ENCODE measurements at regions of chr1 and their contacts with region 1.

Region 1: GRCh38 chr1:156146020-156146768 is 7.2 kb upstream of the SEMA4A start:
- DNase-seq: peak; percentile 97
- ATAC-seq: peak; percentile 81
- H3K4me3 ChIP-seq: no peak overlapping the region
- H3K27ac ChIP-seq: 0 out of 2 replicates have a peak overlapping the region, but pooled peaks have one; percentile 1
- H3K4me1 ChIP-seq: peaks cover 15% of the 10 kb centered on the region
- H3K27me3 ChIP-seq: no peaks in the 10 kb centered on the region
- CTCF ChIP-seq: peak; percentile 85

Region 2: DNA sequence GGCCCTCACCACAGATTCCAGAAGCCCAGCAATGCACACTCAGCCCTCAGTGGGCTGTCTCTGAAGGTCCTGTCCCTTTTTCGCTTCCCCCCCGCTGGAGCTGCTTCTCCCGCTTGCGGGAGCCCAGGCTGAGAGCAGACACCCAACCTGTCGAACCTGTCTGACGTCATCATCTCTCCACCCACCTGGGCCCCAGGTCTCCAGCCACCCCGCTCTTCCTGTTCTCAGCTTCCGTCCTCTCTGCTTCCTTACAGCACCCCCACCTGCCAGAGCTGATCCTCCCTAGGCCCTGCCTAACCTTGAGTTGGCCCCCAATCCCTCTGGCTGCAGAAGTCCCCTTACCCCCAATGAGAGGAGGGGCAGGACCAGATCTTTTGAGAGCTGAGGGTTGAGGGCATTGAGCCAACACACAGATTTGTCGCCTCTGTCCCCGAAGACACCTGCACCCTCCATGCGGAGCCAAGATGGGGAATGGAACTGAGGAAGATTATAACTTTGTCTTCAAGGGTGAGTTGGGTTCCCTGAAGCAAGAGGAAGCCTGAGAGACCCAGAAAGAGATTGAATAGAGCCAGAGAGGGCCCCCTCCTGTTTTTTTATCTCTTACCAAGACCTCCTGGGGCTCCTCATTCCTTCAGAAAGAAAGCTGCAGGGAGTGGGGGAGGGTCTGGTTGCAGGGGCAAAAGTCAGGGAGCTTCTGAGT is 85.1 kb before region 1 on chr1 and contains the start of gene RAB25:
- CTCF ChIA-PET with region 1: no interaction called
- POLR2A ChIA-PET with region 1: no interaction called
- intact Hi-C with region 1: no loop called
- DNase-seq: peak; percentile 66
- ATAC-seq: peak; percentile 11; the same call in 1 of the 2 replicates
- H3K4me3 ChIP-seq: peak within 1 kb of the TSS; percentile 49
- H3K27ac ChIP-seq: peak within 1 kb of the TSS; percentile 20
- H3K4me1 ChIP-seq: peaks cover 10% of the 10 kb centered on the region; the same call in 1 of the 2 replicates
- H3K27me3 ChIP-seq: no peaks in the 10 kb centered on the region
- CTCF ChIP-seq: no peak
- total RNA-seq, gene RAB25: 18.1 and 18.5 TPM in 2 replicates

Region 3: GRCh38 chr1:156090822-156091188 is 55.4 kb before region 1 on chr1:
- CTCF ChIA-PET with region 1: interaction called, 6 read pairs
- POLR2A ChIA-PET with region 1: interaction called, 8 read pairs
- intact Hi-C with region 1: loop called (anchors 1 kb)
- DNase-seq: peak; percentile 97
- ATAC-seq: peak; percentile 95
- H3K4me3 ChIP-seq: no peak overlapping the region
- H3K27ac ChIP-seq: no peak overlapping the region
- H3K4me1 ChIP-seq: peaks cover 21% of the 10 kb centered on the region
- H3K27me3 ChIP-seq: no peaks in the 10 kb centered on the region
- CTCF ChIP-seq: peak; percentile 96

Region 4: GRCh38 chr1:156123356-156124196 is 22.6 kb before region 1 on chr1:
- CTCF ChIA-PET with region 1: interaction called, 17 read pairs
- POLR2A ChIA-PET with region 1: no interaction called
- intact Hi-C with region 1: no loop called
- DNase-seq: peak; percentile 99
- ATAC-seq: peak; percentile 33
- H3K4me3 ChIP-seq: peak overlapping the region; percentile 54
- H3K27ac ChIP-seq: peak overlapping the region; percentile 98
- H3K4me1 ChIP-seq: peaks cover 92% of the 10 kb centered on the region
- H3K27me3 ChIP-seq: no peaks in the 10 kb centered on the region
- CTCF ChIP-seq: peak; percentile 61

Region 5: DNA sequence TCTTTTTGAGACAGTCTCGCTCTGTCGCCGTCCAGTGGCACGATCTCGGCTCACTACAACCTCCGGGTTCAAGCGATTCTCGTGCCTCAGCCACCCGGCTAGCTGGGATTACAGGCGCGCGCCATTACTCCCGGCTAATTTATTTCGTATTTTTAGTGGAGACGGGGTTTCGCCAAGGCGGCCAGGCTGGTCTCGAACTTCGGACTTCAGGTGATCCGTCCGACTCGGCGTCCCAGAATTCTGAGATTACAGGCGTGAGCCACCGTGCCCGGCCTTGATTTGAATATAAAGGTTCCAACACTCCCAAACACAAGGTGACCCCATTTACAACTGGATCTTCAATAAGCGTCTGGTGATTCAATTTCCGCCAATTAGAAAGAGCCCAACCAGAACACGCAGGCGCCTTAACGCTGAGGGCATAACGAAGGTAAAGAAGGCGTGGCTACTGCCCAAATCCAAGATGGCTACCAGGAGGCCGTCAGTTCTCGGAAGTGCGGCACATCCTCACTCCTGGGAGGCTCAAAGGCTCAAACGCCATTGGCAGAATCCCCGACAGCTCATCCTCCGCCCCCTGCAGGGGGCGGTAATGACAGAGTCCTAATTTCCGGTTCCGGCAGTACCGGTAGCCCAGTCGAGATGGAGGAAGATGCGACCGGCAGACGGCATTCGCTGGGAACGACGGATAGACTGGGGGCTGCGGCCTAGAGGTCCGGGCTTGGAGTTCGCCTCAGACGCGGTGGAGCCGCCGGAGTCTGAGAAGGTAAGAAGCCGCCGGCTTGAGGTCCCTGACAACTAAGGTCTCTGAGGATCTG is 47.5 kb after region 1 on chr1 and contains the start of gene SLC25A44:
- CTCF ChIA-PET with region 1: interaction called, 4 read pairs
- POLR2A ChIA-PET with region 1: interaction called, 5 read pairs
- intact Hi-C with region 1: loop called (anchors 1 kb)
- DNase-seq: peak; percentile 100
- ATAC-seq: peak; percentile 98
- H3K4me3 ChIP-seq: peak within 1 kb of the TSS; percentile 87
- H3K27ac ChIP-seq: peak within 1 kb of the TSS; percentile 67
- H3K4me1 ChIP-seq: peaks cover 6% of the 10 kb centered on the region
- H3K27me3 ChIP-seq: no peaks in the 10 kb centered on the region
- CTCF ChIP-seq: peak; percentile 43
- total RNA-seq, gene SLC25A44: 28.1 and 33.1 TPM in 2 replicates

Region 6: GRCh38 chr1:156212833-156213643 is 66.8 kb after region 1 on chr1 and contains the start of gene PMF1:
- CTCF ChIA-PET with region 1: interaction called, 13 read pairs
- POLR2A ChIA-PET with region 1: interaction called, 4 read pairs
- intact Hi-C with region 1: no loop called
- DNase-seq: peak; percentile 97
- ATAC-seq: peak; percentile 96
- H3K4me3 ChIP-seq: peak within 1 kb of the TSS; percentile 84
- H3K27ac ChIP-seq: peak within 1 kb of the TSS; percentile 85
- H3K4me1 ChIP-seq: peaks cover 23% of the 10 kb centered on the region
- H3K27me3 ChIP-seq: no peaks in the 10 kb centered on the region
- CTCF ChIP-seq: no peak
- total RNA-seq, gene PMF1: 131 and 163 TPM in 2 replicates

Region 7: DNA sequence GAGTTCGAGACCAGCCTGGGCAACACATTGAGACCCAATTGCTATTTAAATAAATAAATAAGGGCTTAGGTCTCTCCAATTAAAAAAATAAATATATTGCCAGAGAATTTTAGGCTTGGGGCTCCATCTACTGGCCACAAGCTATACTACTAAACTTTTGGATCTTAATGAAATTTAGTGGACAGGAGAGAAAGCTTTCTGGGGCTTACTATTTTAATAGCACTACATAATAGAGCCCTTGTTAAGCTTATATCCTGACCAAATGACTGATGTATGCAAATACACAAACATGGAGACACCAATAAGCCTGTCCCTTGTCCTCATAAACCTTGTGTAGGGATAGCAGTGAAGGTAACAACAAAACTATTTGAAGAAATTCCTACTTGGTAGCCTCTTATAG is 173.5 kb after region 1 on chr1:
- CTCF ChIA-PET with region 1: interaction called, 10 read pairs
- POLR2A ChIA-PET with region 1: no interaction called
- intact Hi-C with region 1: loop called (anchors 10 kb)
- DNase-seq: peak; percentile 65
- ATAC-seq: peak; percentile 27
- H3K4me3 ChIP-seq: no peak overlapping the region
- H3K27ac ChIP-seq: no peak overlapping the region
- H3K4me1 ChIP-seq: peaks cover 11% of the 10 kb centered on the region
- H3K27me3 ChIP-seq: no peaks in the 10 kb centered on the region
- CTCF ChIP-seq: peak; percentile 83

Measured in PC-3 (cell line).